ENCODE measurements at regions of chr1 and their contacts with region 1.

Region 1: DNA sequence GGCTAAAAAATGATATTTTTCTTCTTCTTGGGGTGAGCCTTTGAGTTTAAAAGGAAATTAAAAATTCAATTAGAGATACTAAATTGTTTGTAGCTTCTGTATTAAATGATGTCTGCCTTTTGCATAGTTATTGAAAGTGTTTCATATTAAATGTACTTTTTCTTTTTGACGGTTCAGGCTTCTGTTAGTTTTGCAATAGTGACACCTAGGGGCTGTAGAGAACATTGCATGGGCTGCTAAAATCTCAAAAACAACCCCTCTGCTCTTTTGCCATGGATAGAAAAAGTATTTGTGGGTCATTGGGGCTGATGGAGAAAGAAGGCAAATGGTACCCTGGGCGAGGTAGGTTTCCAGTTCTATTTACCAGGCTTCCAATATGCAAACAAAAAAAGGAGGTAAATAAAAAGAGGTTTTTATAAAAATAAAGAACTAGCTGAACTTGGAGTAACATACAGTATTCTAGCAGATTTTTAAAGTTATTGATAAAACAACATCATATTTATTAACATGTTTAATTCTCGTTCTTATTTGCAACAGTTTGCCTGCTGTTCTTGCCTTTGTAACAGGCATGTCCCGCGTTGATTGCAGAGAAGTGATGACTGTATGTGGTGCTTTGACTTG is 115.4 kb upstream of the HOOK1 start:
- DNase-seq: peak; percentile 36
- CTCF ChIP-seq: peak; percentile 81

Region 2: GRCh38 chr1:58739856-58740466 is 959.4 kb before region 1 on chr1:
- CTCF ChIA-PET with region 1: interaction called, 31 read pairs
- POLR2A ChIA-PET with region 1: no interaction called
- DNase-seq: peak; percentile 70
- CTCF ChIP-seq: peak; percentile 56

Region 3: DNA sequence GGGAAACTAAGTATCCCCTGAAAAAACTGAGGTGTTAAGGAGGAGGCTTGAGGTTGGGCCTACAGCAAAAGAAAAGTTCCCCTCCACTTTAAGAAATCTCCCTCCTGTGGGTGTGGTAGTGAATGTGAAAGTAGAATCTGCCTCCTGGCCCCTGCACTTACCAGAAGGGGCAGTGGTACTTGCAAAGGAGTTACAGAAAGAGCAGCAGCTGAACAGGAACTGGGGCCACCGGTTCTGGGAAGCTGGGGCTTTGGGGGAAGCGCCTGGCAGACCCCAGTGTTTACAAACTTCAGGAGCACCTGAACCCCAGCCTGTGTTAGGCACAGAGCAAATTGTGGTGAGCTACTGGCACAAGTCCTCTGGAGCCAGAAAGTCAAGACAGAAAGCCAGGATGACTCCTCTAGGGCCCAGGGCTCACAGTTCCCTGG is 652.6 kb before region 1 on chr1:
- CTCF ChIA-PET with region 1: interaction called, 11 read pairs
- POLR2A ChIA-PET with region 1: no interaction called
- DNase-seq: peak; percentile 79
- CTCF ChIP-seq: peak; percentile 19

Region 4: DNA sequence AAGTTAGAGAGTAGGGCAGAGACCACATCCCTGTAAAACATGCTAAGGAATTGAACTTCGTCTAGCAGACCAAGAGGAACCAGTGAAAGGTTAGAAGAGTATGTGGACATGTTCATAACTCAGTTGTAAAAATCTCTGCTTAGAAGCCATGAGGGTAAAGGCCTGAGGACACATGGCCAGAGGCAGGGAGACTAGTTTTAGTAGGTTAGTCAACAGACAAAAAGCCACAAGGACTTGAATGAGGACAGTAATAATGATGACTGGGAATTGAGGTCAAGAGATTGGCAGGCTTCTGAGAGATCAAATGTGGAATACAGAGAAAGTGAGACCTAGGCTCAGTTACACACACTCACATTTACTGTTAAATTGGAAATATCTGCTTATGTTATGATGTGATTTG is 90.1 kb before region 1 on chr1:
- CTCF ChIA-PET with region 1: no interaction called
- POLR2A ChIA-PET with region 1: no interaction called
- DNase-seq: no peak
- CTCF ChIP-seq: no peak

Region 5: GRCh38 chr1:59686170-59686569 is 13.2 kb before region 1 on chr1:
- CTCF ChIA-PET with region 1: interaction called, 16 read pairs
- POLR2A ChIA-PET with region 1: no interaction called
- DNase-seq: no peak
- CTCF ChIP-seq: no peak

Region 6: GRCh38 chr1:59730759-59731478 is 31.6 kb after region 1 on chr1:
- CTCF ChIA-PET with region 1: interaction called, 11 read pairs
- POLR2A ChIA-PET with region 1: no interaction called
- DNase-seq: no peak
- CTCF ChIP-seq: no peak

Region 7: GRCh38 chr1:59759156-59759925 is 60.0 kb after region 1 on chr1:
- CTCF ChIA-PET with region 1: interaction called, 27 read pairs
- POLR2A ChIA-PET with region 1: no interaction called
- DNase-seq: peak; percentile 82
- CTCF ChIP-seq: peak; percentile 87